ENCODE measurements at regions of chr15 and their contacts with region 1.

Region 1: GRCh38 chr15:31365655-31366127 is 39.1 kb downstream of the KLF13 start:
- DNase-seq: no peak
- ATAC-seq: peak; percentile 81
- H3K4me3 ChIP-seq: peak overlapping the region; percentile 20; the same call in 1 of the 2 replicates
- H3K27ac ChIP-seq: peak overlapping the region; percentile 41
- H3K4me1 ChIP-seq: peaks cover 75% of the 10 kb centered on the region
- H3K27me3 ChIP-seq: no peaks in the 10 kb centered on the region
- CTCF ChIP-seq: peak; percentile 32 to 57 (median 50); a peak in 4 of 6 replicates
- EP300 ChIP-seq: no peak
- POLR2A ChIP-seq: no peak
- RAD21 ChIP-seq: 0 out of 2 replicates have a peak, but pooled peaks have one; percentile 38

Region 2: GRCh38 chr15:31344823-31345605 is 20.7 kb before region 1 on chr15:
- CTCF ChIA-PET with region 1: interaction called, 6 read pairs
- POLR2A ChIA-PET with region 1: interaction called, 3 read pairs
- RAD21 ChIA-PET with region 1: interaction called, 22 read pairs
- SMC1A ChIA-PET with region 1: interaction called, 6 read pairs
- in situ Hi-C with region 1: no loop called
- intact Hi-C with region 1: no loop called
- DNase-seq: no peak
- ATAC-seq: peak; percentile 68
- H3K4me3 ChIP-seq: peak overlapping the region; percentile 80
- H3K27ac ChIP-seq: peak overlapping the region; percentile 96
- H3K4me1 ChIP-seq: peaks cover 87% of the 10 kb centered on the region
- H3K27me3 ChIP-seq: no peaks in the 10 kb centered on the region
- CTCF ChIP-seq: no peak
- EP300 ChIP-seq: no peak
- POLR2A ChIP-seq: peak; percentile 65
- RAD21 ChIP-seq: no peak

Region 3: GRCh38 chr15:31352911-31353811 is 12.5 kb before region 1 on chr15:
- CTCF ChIA-PET with region 1: interaction called, 41 read pairs
- POLR2A ChIA-PET with region 1: interaction called, 7 read pairs
- RAD21 ChIA-PET with region 1: interaction called, 26 read pairs
- SMC1A ChIA-PET with region 1: interaction called, 20 read pairs
- in situ Hi-C with region 1: no loop called
- intact Hi-C with region 1: no loop called
- DNase-seq: peak; percentile 83
- ATAC-seq: peak; percentile 87
- H3K4me3 ChIP-seq: peak overlapping the region; percentile 52; the same call in 1 of the 2 replicates
- H3K27ac ChIP-seq: peak overlapping the region; percentile 93
- H3K4me1 ChIP-seq: peaks cover 89% of the 10 kb centered on the region
- H3K27me3 ChIP-seq: no peaks in the 10 kb centered on the region
- CTCF ChIP-seq: peak in 2 of 3 experiments; percentile 7 to 22; a peak in 2 of 6 replicates
- EP300 ChIP-seq: peak; percentile 57 to 70; a peak in 3 of 4 replicates
- POLR2A ChIP-seq: peak; percentile 48; the same call in 1 of the 2 replicates
- RAD21 ChIP-seq: no peak

Region 4: GRCh38 chr15:31381801-31382712 is 16.4 kb after region 1 on chr15:
- CTCF ChIA-PET with region 1: interaction called, 5 read pairs
- POLR2A ChIA-PET with region 1: interaction called, 4 read pairs
- RAD21 ChIA-PET with region 1: interaction called, 4 read pairs
- SMC1A ChIA-PET with region 1: interaction called, 12 read pairs
- in situ Hi-C with region 1: no loop called
- intact Hi-C with region 1: no loop called
- DNase-seq: no peak
- ATAC-seq: peak; percentile 27
- H3K4me3 ChIP-seq: no peak overlapping the region
- H3K27ac ChIP-seq: no peak overlapping the region
- H3K4me1 ChIP-seq: no peaks in the 10 kb centered on the region
- H3K27me3 ChIP-seq: no peaks in the 10 kb centered on the region
- CTCF ChIP-seq: no peak
- EP300 ChIP-seq: no peak
- POLR2A ChIP-seq: peak; percentile 18; the same call in 1 of the 2 replicates
- RAD21 ChIP-seq: no peak

Measured in GM12878 (cell line).